CD8-positive, alpha-beta T cell (primary cell): ENCODE measurements at regions of chr18 and their contacts with region 1.

Region 1: DNA sequence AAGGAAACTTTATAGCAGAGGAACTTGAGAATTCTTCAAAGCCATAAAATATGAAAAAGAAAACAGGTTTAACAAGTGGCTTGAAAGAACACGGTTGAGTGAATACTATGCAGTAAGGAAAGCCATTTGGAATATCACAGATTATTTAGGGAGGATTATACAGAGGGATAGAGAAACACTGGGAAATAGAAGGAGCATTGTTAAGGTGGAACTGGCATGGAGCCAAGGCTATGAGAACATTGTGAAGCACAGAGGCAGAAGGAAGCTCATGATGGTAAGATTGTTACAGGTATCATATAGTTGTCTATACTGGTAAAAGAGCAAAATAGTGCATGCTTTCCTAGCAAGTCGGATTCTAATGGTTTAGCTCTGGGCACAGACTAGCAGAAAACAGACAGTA is 87.1 kb downstream of the SS18 start:
- DNase-seq: no peak
- ATAC-seq: no peak
- H3K4me3 ChIP-seq: no peak overlapping the region
- H3K4me3 Mint-ChIP-seq: no peak overlapping the region
- H3K27ac ChIP-seq: no peak overlapping the region
- H3K27ac Mint-ChIP-seq: no peak overlapping the region
- H3K4me1 ChIP-seq: no peaks in the 10 kb centered on the region
- H3K4me1 Mint-ChIP-seq: no peaks in the 10 kb centered on the region
- H3K27me3 ChIP-seq: no peaks in the 10 kb centered on the region
- H3K27me3 Mint-ChIP-seq: no peaks in the 10 kb centered on the region
- CTCF ChIP-seq: no peak

Region 2: DNA sequence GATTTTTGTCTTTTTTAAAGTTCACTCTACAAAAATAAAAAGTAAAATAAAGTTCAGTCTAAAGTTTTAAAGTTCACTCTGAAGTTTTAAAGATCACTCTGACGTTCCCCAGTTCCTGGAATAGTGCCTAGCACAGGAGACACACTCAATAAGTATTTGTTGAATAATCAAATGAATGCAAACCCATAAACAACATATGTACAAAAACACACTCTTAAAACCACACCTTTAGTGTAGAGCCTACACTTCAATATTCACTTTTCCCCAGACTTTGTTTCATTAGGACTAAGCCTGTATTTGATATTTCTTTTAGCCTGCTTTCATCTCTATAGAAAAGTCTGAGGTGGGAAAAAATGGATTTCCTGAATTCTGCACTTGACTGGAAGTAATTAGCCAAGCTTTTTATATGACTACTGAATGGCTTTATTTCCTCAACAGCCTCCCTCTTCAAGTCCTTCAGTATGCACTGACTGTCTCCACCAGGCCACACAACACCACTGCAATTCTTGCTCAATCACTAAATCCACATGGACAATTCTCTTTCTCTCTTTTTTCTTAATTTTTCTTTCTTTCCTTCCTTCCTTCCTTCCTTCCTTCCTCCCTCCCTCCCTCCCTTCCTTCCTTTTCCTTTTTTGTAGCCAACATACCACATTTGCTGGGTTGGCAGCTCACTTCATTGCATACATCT is 17.5 kb before region 1 on chr18:
- CTCF ChIA-PET with region 1: no interaction called
- POLR2A ChIA-PET with region 1: no interaction called
- intact Hi-C with region 1: loop called in 1 of 2 experiments (anchors 1 kb)
- DNase-seq: no peak
- ATAC-seq: no peak
- H3K4me3 ChIP-seq: no peak overlapping the region
- H3K4me3 Mint-ChIP-seq: no peak overlapping the region
- H3K27ac ChIP-seq: no peak overlapping the region
- H3K27ac Mint-ChIP-seq: no peak overlapping the region
- H3K4me1 ChIP-seq: no peaks in the 10 kb centered on the region
- H3K4me1 Mint-ChIP-seq: no peaks in the 10 kb centered on the region
- H3K27me3 ChIP-seq: no peaks in the 10 kb centered on the region
- H3K27me3 Mint-ChIP-seq: peaks cover 12% of the 10 kb centered on the region
- CTCF ChIP-seq: no peak